HepG2 (cell line): ENCODE measurements at regions of chr2 and their contacts with region 1.

Region 1: GRCh38 chr2:105822186-105822585 is 77.5 kb downstream of the NCK2 start:
- DNase-seq: peak; percentile 16
- ATAC-seq: peak; percentile 66
- H3K4me3 ChIP-seq: peak overlapping the region in 1 of 3 experiments; percentile 11; a peak in 1 of 6 replicates
- H3K27ac ChIP-seq: peak overlapping the region; percentile 68
- H3K4me1 ChIP-seq: peaks cover 42% of the 10 kb centered on the region
- H3K27me3 ChIP-seq: no peaks in the 10 kb centered on the region
- CTCF ChIP-seq: 0 out of 2 replicates have a peak, but pooled peaks have one; percentile 9
- EP300 ChIP-seq: no peak
- POLR2A ChIP-seq: no peak
- RAD21 ChIP-seq: no peak

Region 2: GRCh38 chr2:105744091-105744908 is 77.9 kb before region 1 on chr2:
- CTCF ChIA-PET with region 1: no interaction called
- POLR2A ChIA-PET with region 1: no interaction called
- in situ Hi-C with region 1: no loop called
- intact Hi-C with region 1: loop called (anchors 5 kb)
- DNase-seq: peak; percentile 19
- ATAC-seq: peak; percentile 76
- H3K4me3 ChIP-seq: peak overlapping the region; percentile 63 to 83 (median 72)
- H3K27ac ChIP-seq: no peak overlapping the region
- H3K4me1 ChIP-seq: peaks cover 38% of the 10 kb centered on the region
- H3K27me3 ChIP-seq: peaks cover 0 to 22% of the 10 kb centered on the region in 2 experiments; a peak in 3 of 5 replicates
- CTCF ChIP-seq: peak; percentile 3; the same call in 1 of the 2 replicates
- EP300 ChIP-seq: no peak
- POLR2A ChIP-seq: no peak
- RAD21 ChIP-seq: no peak

Region 3: GRCh38 chr2:105800036-105800713 is 22.0 kb before region 1 on chr2:
- CTCF ChIA-PET with region 1: no interaction called
- POLR2A ChIA-PET with region 1: no interaction called
- in situ Hi-C with region 1: no loop called
- intact Hi-C with region 1: loop called (anchors 2 kb)
- DNase-seq: peak; percentile 65
- ATAC-seq: peak; percentile 68
- H3K4me3 ChIP-seq: no peak overlapping the region
- H3K27ac ChIP-seq: no peak overlapping the region
- H3K4me1 ChIP-seq: peaks cover 53% of the 10 kb centered on the region
- H3K27me3 ChIP-seq: no peaks in the 10 kb centered on the region
- CTCF ChIP-seq: no peak
- EP300 ChIP-seq: peak in 1 of 2 experiments; percentile 27; a peak in 1 of 4 replicates
- POLR2A ChIP-seq: no peak
- RAD21 ChIP-seq: no peak